Right ventricle myocardium inferior (tissue), 1 donor: ENCODE measurements at regions of chr1 and their contacts with region 1.

Region 1: GRCh38 chr1:204565617-204566582 is 49.7 kb downstream of the MDM4 start:
- DNase-seq: no peak
- ATAC-seq: peak; percentile 82

Region 2: DNA sequence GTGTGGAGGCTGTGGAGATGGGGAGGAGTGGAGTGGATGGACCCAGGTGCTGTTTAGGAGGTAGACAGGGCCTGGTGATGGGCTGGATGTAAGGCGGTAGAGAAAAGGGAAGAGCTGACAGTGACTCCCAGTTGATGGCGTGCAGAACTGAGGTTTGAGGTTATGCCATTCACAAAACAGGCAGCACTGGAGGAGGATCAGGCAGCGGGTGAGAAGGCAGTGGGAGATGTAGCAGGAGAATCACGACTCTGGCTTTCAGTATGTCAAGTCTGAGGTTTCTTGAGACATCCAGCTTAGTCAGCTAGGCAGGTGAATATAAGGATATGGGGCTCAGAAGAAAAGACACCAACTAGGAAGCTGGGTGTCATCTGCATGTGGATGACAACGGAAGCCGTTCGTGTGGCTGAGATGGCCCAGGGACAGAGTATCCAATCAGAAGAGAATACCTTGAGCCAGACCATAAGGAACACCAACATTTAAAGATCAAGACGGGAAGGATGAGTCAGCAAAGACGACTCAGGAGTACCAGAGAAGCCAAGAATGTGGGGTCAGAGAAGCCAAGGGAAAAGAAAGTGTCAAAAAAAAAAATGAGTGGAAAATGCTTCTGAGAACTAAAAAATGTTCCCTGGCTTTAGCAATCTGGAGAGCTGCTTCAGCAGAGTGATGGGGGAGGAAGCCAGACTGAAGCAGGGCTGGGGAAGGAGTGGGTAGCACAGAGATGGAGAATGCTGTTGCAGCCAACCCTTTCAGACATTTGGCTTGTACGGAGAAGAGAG is 104.4 kb after region 1 on chr1:
- intact Hi-C with region 1: no loop called
- DNase-seq: no peak
- ATAC-seq: no peak

Region 3: DNA sequence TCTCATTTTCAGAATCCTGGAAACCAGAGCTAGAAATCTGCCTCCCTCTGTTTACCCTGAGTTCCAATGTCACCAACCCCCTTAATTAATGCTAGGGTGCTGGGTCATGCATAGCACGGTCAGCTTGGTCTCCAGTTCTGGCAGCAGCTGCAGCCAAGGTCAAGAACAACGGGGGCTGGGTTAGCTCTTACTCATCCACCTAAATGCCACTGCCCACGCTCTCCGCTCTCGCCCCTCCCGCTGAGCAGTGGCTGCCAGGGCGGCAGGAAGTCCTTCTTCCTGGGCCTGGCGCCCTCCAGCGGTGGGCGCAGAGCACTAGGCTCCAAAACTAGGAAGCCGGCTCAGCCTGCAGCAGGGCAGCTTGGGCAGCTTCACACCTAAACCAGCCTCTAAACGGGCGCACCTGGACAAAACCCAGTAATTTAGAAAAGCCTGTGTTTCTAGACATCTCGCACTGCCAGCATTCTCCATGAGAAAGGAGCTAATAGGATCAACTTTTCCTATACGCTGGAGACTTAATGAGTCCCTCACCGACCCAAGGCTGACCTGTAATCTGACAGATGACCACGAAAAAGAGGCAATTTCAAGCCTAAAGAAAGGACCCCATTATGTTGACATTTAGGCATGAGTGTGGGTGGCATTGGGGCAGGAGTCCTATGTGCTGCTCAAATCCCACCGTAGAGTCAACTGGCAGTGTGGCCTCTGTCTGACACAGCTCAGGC is 198.0 kb after region 1 on chr1:
- intact Hi-C with region 1: loop called (anchors 2 kb)
- DNase-seq: peak; percentile 80
- ATAC-seq: peak; percentile 81